ENCODE measurements at regions of chr11 and their contacts with region 1.

Region 1: DNA sequence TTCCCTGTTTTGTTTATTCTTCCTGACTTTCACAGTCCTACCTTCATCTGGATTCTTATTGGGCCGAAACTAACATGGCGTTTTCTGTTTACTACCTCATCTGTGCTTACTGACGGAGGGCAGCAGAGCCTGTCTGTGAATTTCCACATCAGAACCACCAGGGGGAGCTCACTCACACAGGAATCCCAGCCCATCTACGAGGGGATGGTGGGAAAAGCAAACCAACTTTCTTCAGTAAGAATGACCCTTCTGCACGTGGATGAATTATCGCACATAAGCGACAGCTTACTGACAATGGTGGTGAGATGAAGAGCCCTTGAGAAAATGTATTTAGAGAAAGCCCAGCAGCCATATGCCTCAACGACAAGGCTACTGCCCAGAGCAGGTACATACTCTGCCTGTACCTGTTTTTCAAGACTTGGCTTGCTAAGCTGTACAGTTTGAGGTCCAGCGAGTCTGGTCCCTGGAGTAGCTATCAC is 42.5 kb downstream of the LARGE2 start:
- DNase-seq: peak; percentile 62
- H3K4me3 Mint-ChIP-seq: no peak overlapping the region
- H3K27ac Mint-ChIP-seq: no peak overlapping the region
- H3K4me1 Mint-ChIP-seq: no peaks in the 10 kb centered on the region
- H3K27me3 Mint-ChIP-seq: no peaks in the 10 kb centered on the region

Region 2: GRCh38 chr11:45851228-45851627 is 113.7 kb before region 1 on chr11:
- CTCF ChIA-PET with region 1: no interaction called
- POLR2A ChIA-PET with region 1: no interaction called
- DNase-seq: no peak
- H3K4me3 Mint-ChIP-seq: no peak overlapping the region
- H3K27ac Mint-ChIP-seq: no peak overlapping the region
- H3K4me1 Mint-ChIP-seq: peaks cover 35% of the 10 kb centered on the region
- H3K27me3 Mint-ChIP-seq: no peaks in the 10 kb centered on the region

Region 3: GRCh38 chr11:45879803-45880686 is 84.9 kb before region 1 on chr11:
- CTCF ChIA-PET with region 1: no interaction called
- POLR2A ChIA-PET with region 1: no interaction called
- DNase-seq: no peak
- H3K4me3 Mint-ChIP-seq: no peak overlapping the region
- H3K27ac Mint-ChIP-seq: no peak overlapping the region
- H3K4me1 Mint-ChIP-seq: peaks cover 4% of the 10 kb centered on the region
- H3K27me3 Mint-ChIP-seq: peaks cover 4% of the 10 kb centered on the region

Region 4: GRCh38 chr11:45899448-45900173 is 65.3 kb before region 1 on chr11:
- CTCF ChIA-PET with region 1: no interaction called
- POLR2A ChIA-PET with region 1: no interaction called
- DNase-seq: peak; percentile 70
- H3K4me3 Mint-ChIP-seq: peak overlapping the region; percentile 35
- H3K27ac Mint-ChIP-seq: no peak overlapping the region
- H3K4me1 Mint-ChIP-seq: peaks cover 9% of the 10 kb centered on the region
- H3K27me3 Mint-ChIP-seq: peaks cover 27% of the 10 kb centered on the region

Region 5: GRCh38 chr11:45930031-45930794 is 34.7 kb before region 1 on chr11:
- CTCF ChIA-PET with region 1: interaction called, 10 read pairs
- POLR2A ChIA-PET with region 1: interaction called, 6 read pairs
- DNase-seq: peak; percentile 73
- H3K4me3 Mint-ChIP-seq: peak overlapping the region; percentile 50
- H3K27ac Mint-ChIP-seq: peak overlapping the region; percentile 95
- H3K4me1 Mint-ChIP-seq: peaks cover 35% of the 10 kb centered on the region
- H3K27me3 Mint-ChIP-seq: no peaks in the 10 kb centered on the region

Region 6: DNA sequence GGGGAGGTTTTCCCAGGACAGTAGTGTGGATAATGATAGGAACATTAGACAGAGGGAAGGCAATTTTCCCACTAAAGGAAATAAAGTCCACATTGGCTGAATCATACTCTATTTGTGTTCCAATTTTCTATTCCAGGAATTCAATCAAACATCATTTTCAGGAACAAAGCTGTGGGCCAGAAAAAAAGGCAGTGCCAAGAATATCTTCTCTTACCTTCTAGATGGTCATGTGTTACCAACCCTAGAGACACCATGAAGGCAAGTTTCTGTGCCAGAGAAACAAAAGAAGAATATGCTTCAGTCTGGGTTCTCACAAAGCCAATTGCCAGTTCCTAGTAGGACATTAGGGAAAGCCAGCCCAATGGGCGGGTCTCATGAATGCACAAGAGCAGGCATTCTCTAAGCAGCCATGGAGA is 14.9 kb before region 1 on chr11:
- CTCF ChIA-PET with region 1: interaction called, 40 read pairs
- POLR2A ChIA-PET with region 1: no interaction called
- DNase-seq: no peak
- H3K4me3 Mint-ChIP-seq: no peak overlapping the region
- H3K27ac Mint-ChIP-seq: no peak overlapping the region
- H3K4me1 Mint-ChIP-seq: no peaks in the 10 kb centered on the region
- H3K27me3 Mint-ChIP-seq: no peaks in the 10 kb centered on the region

Region 7: GRCh38 chr11:45993531-45994001 is 28.6 kb after region 1 on chr11:
- CTCF ChIA-PET with region 1: interaction called, 10 read pairs
- POLR2A ChIA-PET with region 1: no interaction called
- DNase-seq: no peak
- H3K4me3 Mint-ChIP-seq: no peak overlapping the region
- H3K27ac Mint-ChIP-seq: no peak overlapping the region
- H3K4me1 Mint-ChIP-seq: no peaks in the 10 kb centered on the region
- H3K27me3 Mint-ChIP-seq: no peaks in the 10 kb centered on the region

Region 8: GRCh38 chr11:46006418-46007070 is 41.6 kb after region 1 on chr11:
- CTCF ChIA-PET with region 1: interaction called, 44 read pairs
- POLR2A ChIA-PET with region 1: no interaction called
- DNase-seq: no peak
- H3K4me3 Mint-ChIP-seq: no peak overlapping the region
- H3K27ac Mint-ChIP-seq: no peak overlapping the region
- H3K4me1 Mint-ChIP-seq: peaks cover 2% of the 10 kb centered on the region
- H3K27me3 Mint-ChIP-seq: no peaks in the 10 kb centered on the region

Region 9: DNA sequence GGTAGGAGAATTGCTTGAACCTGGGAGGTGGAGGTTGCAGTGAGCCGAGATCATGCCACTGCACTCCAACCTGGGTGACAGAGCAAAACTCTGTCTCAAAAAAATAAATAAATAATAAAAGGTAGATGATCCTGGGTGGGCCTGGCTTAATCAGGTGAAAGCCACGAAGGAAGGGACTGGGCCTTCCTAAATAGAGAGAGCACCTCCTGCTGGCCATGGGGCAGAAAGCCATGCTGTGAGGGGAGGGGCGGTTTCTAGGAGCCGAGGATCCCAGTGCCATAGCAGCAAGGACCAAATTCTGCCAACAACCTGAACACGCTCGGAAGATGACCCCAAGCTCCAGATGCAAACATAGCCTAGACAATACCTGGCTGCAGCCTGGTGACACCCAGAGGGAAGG is 357.8 kb after region 1 on chr11:
- CTCF ChIA-PET with region 1: no interaction called
- POLR2A ChIA-PET with region 1: no interaction called
- DNase-seq: peak; percentile 27
- H3K4me3 Mint-ChIP-seq: no peak overlapping the region
- H3K27ac Mint-ChIP-seq: no peak overlapping the region
- H3K4me1 Mint-ChIP-seq: peaks cover 23% of the 10 kb centered on the region
- H3K27me3 Mint-ChIP-seq: peaks cover 8% of the 10 kb centered on the region